ENCODE measurements at regions of chr4 and their contacts with region 1.

Region 1: GRCh38 chr4:140153718-140154571 is at the start of gene MAML3:
- DNase-seq: peak; percentile 88
- H3K4me3 ChIP-seq: peak within 1 kb of the TSS; percentile 83
- CTCF ChIP-seq: no peak

Region 2: GRCh38 chr4:140109737-140110136 is 44.2 kb before region 1 on chr4:
- in situ Hi-C with region 1: loop called (anchors 5 kb)
- DNase-seq: no peak
- H3K4me3 ChIP-seq: no peak overlapping the region
- CTCF ChIP-seq: no peak

Region 3: GRCh38 chr4:140237606-140237986 is 83.7 kb after region 1 on chr4:
- in situ Hi-C with region 1: loop called (anchors 5 kb)
- DNase-seq: peak; percentile 89
- H3K4me3 ChIP-seq: no peak overlapping the region
- CTCF ChIP-seq: no peak

Measured in astrocyte of the cerebellum (primary cell).